ENCODE measurements at regions of chr16 and their contacts with region 1.

Region 1: DNA sequence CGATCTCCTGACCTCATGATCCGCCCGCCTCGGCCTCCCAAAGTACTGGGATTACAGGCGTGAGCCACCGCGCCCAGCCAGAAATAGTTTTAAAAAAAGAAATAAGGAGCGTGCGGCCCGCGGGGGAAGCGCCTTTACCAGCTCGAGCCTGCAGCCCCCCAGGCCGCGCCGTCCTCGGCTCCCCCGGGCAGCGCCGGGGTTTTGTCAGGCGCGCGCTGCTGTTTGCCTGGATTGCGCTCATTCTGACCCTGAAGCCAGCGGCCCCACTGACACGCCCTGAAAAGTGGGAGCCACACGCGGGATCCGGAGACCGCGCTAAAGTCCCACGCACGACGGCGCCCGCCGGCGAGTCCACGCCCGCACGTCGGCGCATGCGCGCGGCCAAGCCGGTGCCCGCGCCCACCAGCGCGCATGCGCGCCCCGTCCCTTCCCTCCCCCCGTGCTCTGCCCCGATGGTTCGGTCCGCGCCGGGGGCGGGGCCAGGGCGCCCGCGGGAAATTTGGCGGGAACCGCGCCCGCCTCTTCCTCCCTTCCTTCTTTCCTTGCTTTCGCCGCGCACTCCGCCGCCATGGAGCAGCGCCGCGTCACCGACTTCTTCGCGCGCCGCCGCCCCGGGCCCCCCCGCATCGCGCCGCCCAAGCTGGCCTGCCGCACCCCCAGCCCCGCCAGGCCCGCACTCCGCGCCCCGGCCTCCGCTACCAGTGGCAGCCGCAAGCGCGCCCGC is at the start of gene CDT1:
- DNase-seq: peak in 1 of 2 experiments; percentile 89
- H3K4me3 ChIP-seq: peak within 1 kb of the TSS; percentile 82
- H3K27ac ChIP-seq: peak within 1 kb of the TSS; percentile 58
- H3K4me1 ChIP-seq: peaks cover 15% of the 10 kb centered on the region
- H3K27me3 ChIP-seq: no peaks in the 10 kb centered on the region
- CTCF ChIP-seq: no peak
- total RNA-seq, gene CDT1: 73.2 and 95.4 TPM in 2 replicates

Region 2: DNA sequence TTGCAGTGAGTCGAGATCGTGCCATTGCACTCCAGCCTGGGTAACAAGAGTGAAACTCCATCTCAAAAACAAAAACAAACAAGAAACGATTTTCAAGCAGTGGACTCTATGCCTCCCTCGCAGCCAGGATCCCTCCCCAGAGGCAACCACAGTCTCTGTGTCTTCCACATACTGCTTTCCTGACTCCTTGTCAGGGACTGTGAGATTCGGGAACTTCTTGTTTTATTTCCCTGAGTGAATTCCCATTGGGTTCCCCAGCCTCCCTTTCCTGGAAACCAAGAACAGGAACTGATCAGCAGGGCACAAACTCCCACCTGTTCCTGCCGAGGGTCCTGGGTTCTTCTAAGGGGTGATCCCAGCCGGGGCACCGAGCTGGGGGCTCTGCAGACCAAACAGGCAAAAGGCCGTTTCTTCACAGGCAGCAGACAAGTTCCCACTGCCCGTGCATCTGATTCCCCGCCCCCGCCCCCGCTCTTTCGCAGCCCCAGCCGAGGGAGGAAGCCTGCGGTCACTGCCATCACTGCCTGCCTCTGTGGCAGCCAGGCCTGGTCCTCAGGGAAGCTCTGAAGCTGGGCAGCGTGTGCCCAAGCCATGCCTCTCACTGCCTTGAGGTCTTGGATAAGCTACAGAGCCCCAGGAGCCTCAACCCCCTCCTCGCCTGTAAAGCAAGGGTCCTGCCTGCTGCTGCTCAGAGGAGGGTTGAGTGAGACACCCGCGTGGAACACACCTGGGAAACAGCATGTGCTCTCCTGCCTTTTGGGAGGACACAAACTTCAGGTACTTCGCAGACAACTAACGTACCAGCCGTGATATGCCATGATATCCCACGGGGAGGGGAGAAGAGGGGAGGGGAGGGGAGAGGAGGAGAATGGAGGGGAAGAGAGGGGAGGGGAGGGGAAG is 12.9 kb before region 1 on chr16:
- CTCF ChIA-PET with region 1: interaction called, 4 read pairs
- POLR2A ChIA-PET with region 1: interaction called, 11 read pairs
- intact Hi-C with region 1: no loop called
- DNase-seq: no peak
- H3K4me3 ChIP-seq: no peak overlapping the region
- H3K27ac ChIP-seq: no peak overlapping the region
- H3K4me1 ChIP-seq: no peaks in the 10 kb centered on the region
- H3K27me3 ChIP-seq: no peaks in the 10 kb centered on the region
- CTCF ChIP-seq: no peak

Measured in PC-9 (cell line).